CD4-positive, alpha-beta memory T cell (primary cell): ENCODE measurements at regions of chr17 and their contacts with region 1.

Region 1: GRCh38 chr17:42112552-42113176 is at the start of gene DHX58:
- DNase-seq: peak; percentile 81 to 87 (median 84)
- H3K4me3 ChIP-seq: peak within 1 kb of the TSS; percentile 76 to 86
- H3K4me3 Mint-ChIP-seq: peak within 1 kb of the TSS; percentile 87 to 95 (median 92)
- H3K27ac ChIP-seq: peak within 1 kb of the TSS; percentile 88
- H3K27ac Mint-ChIP-seq: peak within 1 kb of the TSS; percentile 92 to 98 (median 98)
- H3K4me1 ChIP-seq: peaks cover 37% of the 10 kb centered on the region
- H3K4me1 Mint-ChIP-seq: peaks cover 24 to 64% (median 46%) of the 10 kb centered on the region in 4 donors
- H3K27me3 ChIP-seq: no peaks in the 10 kb centered on the region
- H3K27me3 Mint-ChIP-seq: no peaks in the 10 kb centered on the region
- total RNA-seq, gene DHX58: 41.8 to 43.3 TPM

Region 2: DNA sequence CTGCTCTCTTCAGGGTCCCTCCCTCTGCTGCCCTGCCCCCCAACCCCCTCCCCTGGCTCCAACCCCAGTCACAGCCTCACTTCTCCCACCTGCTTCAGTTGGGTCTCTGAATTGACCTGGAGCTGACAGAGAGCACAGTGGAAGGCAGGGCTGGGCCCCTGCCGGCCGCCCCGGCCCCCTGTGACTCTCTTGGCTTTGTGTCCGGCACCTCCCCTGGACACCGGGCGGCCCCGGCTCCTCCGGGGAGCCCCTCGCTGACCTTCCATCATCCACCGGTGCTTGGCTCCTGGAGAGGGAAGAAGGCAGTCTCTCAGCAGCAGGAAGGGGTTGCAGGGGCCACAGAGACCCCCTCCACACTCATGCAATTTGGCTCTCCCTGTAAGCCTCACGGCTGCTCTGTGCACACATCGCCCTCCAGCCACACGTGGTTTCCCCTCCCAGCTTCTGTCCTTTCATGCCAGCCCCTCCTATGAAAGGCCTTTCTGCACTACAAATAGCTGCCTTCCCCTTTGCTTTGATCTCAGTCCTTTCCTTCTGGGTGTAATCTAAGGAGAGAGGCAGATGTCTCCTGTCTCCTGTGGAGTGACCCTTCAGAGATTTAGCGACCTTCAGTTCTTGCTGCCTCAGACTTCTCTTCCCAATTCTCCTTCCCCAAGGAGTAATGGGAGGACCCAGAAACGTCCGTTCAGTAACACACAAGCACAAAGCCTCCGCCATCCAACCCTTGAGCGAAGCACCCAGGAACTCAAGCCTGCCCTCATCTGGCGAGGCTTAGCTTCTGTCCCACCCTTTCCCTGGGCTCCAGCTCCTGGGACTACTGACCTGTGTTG is 84.5 kb before region 1 on chr17:
- CTCF ChIA-PET with region 1: interaction called, 43 read pairs
- POLR2A ChIA-PET with region 1: interaction called, 5 read pairs
- intact Hi-C with region 1: loop called (anchors 1 kb)
- DNase-seq: no peak
- H3K4me3 ChIP-seq: no peak overlapping the region
- H3K4me3 Mint-ChIP-seq: no peak overlapping the region
- H3K27ac ChIP-seq: no peak overlapping the region
- H3K27ac Mint-ChIP-seq: no peak overlapping the region
- H3K4me1 ChIP-seq: peaks cover 6% of the 10 kb centered on the region
- H3K4me1 Mint-ChIP-seq: peaks cover 3 to 6% (median 5%) of the 10 kb centered on the region in 4 donors
- H3K27me3 ChIP-seq: no peaks in the 10 kb centered on the region
- H3K27me3 Mint-ChIP-seq: peaks cover 2 to 3% of the 10 kb centered on the region in 2 donors

Region 3: GRCh38 chr17:42067351-42068091 is 45.1 kb before region 1 on chr17:
- CTCF ChIA-PET with region 1: interaction called, 124 read pairs
- POLR2A ChIA-PET with region 1: interaction called, 8 read pairs
- intact Hi-C with region 1: loop called (anchors 1 kb)
- DNase-seq: peak; percentile 48 to 66 (median 59)
- H3K4me3 ChIP-seq: no peak overlapping the region
- H3K4me3 Mint-ChIP-seq: no peak overlapping the region
- H3K27ac ChIP-seq: no peak overlapping the region
- H3K27ac Mint-ChIP-seq: no peak overlapping the region
- H3K4me1 ChIP-seq: peaks cover 18% of the 10 kb centered on the region
- H3K4me1 Mint-ChIP-seq: peaks cover 2 to 8% (median 6%) of the 10 kb centered on the region in 4 donors
- H3K27me3 ChIP-seq: peaks cover 13% of the 10 kb centered on the region
- H3K27me3 Mint-ChIP-seq: peaks cover 8 to 15% of the 10 kb centered on the region in 2 donors

Region 4: DNA sequence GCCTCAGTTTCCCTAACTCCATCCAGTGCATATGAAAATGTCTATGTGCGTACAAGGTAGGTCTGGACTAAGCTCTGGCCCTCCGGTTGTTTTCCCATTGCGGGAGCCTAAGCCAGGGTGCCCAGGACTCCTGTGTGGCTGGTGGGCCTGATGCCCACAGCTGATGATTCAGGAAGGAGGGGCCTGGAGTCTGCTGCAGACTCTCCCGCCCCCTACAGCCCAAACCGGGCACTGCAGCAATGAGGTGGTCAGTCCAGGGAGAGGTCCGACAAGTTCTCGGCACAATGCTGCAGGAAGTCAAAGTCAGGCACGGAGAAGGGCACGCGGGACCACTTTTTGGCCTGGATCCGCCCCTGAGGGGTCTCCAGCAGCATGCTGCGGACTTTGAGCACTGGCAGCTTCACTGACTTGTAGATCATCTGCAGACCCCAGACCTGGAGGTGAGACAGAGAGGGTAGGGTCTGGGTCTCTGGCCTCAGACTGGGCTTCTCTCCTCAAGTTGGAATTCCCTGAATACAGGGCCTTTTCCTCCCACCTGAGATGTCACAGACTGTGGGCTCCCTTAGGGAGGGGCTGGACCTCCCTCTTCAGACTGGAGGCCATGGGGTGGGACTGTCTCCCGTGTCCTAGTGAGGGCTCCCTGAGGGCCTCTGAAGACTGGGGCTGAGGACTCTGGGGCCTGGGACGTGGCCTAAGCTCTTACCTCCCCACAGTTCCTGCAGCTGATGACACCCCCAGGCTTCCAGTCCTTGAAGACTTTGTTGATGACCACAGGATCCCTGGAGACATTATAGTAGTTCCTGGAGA is 10.9 kb before region 1 on chr17:
- CTCF ChIA-PET with region 1: interaction called, 10 read pairs
- POLR2A ChIA-PET with region 1: interaction called, 14 read pairs
- intact Hi-C with region 1: no loop called
- DNase-seq: peak in 4 of 5 donors; percentile 32 to 49 (median 37)
- H3K4me3 ChIP-seq: no peak overlapping the region
- H3K4me3 Mint-ChIP-seq: no peak overlapping the region
- H3K27ac ChIP-seq: no peak overlapping the region
- H3K27ac Mint-ChIP-seq: no peak overlapping the region
- H3K4me1 ChIP-seq: peaks cover 7% of the 10 kb centered on the region
- H3K4me1 Mint-ChIP-seq: peaks cover 2 to 12% (median 7%) of the 10 kb centered on the region in 4 donors
- H3K27me3 ChIP-seq: peaks cover 6% of the 10 kb centered on the region
- H3K27me3 Mint-ChIP-seq: peaks cover 2 to 8% of the 10 kb centered on the region in 2 donors

Region 5: GRCh38 chr17:42153919-42154742 is 41.5 kb after region 1 on chr17:
- CTCF ChIA-PET with region 1: no interaction called
- POLR2A ChIA-PET with region 1: interaction called, 3 read pairs
- intact Hi-C with region 1: loop called (anchors 2 kb)
- DNase-seq: no peak
- H3K4me3 ChIP-seq: peak overlapping the region; percentile 86 to 96
- H3K4me3 Mint-ChIP-seq: peak overlapping the region; percentile 89 to 98 (median 94)
- H3K27ac ChIP-seq: peak overlapping the region; percentile 96
- H3K27ac Mint-ChIP-seq: peak overlapping the region; percentile 82 to 98 (median 96)
- H3K4me1 ChIP-seq: peaks cover 42% of the 10 kb centered on the region
- H3K4me1 Mint-ChIP-seq: peaks cover 24 to 49% (median 37%) of the 10 kb centered on the region in 4 donors
- H3K27me3 ChIP-seq: no peaks in the 10 kb centered on the region
- H3K27me3 Mint-ChIP-seq: no peaks in the 10 kb centered on the region

Region 6: DNA sequence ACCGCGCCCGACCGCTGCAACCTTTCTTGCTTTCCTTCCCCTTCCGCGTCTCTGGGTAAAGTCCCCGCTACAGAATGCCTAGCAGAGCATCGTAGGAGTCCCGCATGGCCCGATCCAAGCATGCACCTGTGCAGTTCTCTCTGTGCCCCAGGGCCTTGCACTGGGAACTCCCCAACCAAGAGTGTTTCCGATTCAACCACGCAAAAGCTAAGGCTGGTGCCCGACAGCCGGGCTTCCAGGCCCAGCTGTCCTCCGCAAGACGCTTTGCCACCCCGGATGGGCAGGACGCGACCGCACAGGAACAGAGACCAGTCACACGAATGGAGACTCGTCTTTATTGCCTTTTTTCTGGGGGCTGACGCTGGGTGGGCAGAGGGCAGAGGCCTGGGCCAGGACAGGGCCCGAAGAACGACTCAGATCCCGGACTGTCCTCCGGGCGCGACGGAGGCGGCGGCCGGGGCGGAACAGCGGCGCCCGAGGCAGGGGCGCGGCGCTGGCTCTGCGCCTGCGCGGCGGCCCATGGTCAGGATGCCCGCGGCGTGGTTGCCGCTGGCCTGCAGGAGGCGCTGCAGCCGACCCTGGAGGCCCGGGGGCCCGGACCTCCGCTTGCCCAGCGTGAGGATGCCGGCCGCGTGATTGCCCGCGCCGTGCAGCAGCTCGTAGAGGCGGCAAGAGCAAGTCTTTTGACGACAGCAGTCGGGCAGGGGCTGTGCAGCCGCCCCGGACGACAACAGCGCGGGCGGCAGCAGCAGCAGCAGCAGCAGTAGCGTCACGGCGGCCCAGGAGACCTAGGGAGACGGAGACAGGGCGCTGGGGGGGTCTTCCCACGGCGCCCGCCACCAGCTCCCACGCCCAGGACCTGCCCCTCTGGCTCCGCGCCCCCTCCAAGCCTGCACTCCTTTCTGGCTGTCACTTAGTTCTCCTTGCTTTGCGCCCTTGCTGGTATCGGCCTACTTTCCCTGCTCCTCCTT is 71.4 kb after region 1 on chr17:
- CTCF ChIA-PET with region 1: no interaction called
- POLR2A ChIA-PET with region 1: interaction called, 4 read pairs
- intact Hi-C with region 1: loop called (anchors 5 kb)
- DNase-seq: peak; percentile 74 to 84 (median 75)
- H3K4me3 ChIP-seq: peak overlapping the region; percentile 63 to 86
- H3K4me3 Mint-ChIP-seq: peak overlapping the region; percentile 87 to 96 (median 91)
- H3K27ac ChIP-seq: peak overlapping the region; percentile 72
- H3K27ac Mint-ChIP-seq: peak overlapping the region; percentile 78 to 94 (median 88)
- H3K4me1 ChIP-seq: peaks cover 56% of the 10 kb centered on the region
- H3K4me1 Mint-ChIP-seq: peaks cover 21 to 52% (median 35%) of the 10 kb centered on the region in 4 donors
- H3K27me3 ChIP-seq: no peaks in the 10 kb centered on the region
- H3K27me3 Mint-ChIP-seq: peaks cover 0 to 5% of the 10 kb centered on the region in 2 donors

Region 7: GRCh38 chr17:42459256-42459800 is 346.7 kb after region 1 on chr17:
- CTCF ChIA-PET with region 1: no interaction called
- POLR2A ChIA-PET with region 1: no interaction called
- intact Hi-C with region 1: no loop called
- DNase-seq: no peak
- H3K4me3 ChIP-seq: peak overlapping the region; percentile 56 to 67
- H3K4me3 Mint-ChIP-seq: peak overlapping the region; percentile 85 to 94 (median 91)
- H3K27ac ChIP-seq: peak overlapping the region; percentile 42
- H3K27ac Mint-ChIP-seq: peak overlapping the region; percentile 86 to 93 (median 90)
- H3K4me1 ChIP-seq: peaks cover 45% of the 10 kb centered on the region
- H3K4me1 Mint-ChIP-seq: peaks cover 31 to 43% (median 40%) of the 10 kb centered on the region in 4 donors
- H3K27me3 ChIP-seq: no peaks in the 10 kb centered on the region
- H3K27me3 Mint-ChIP-seq: no peaks in the 10 kb centered on the region

Region 8: DNA sequence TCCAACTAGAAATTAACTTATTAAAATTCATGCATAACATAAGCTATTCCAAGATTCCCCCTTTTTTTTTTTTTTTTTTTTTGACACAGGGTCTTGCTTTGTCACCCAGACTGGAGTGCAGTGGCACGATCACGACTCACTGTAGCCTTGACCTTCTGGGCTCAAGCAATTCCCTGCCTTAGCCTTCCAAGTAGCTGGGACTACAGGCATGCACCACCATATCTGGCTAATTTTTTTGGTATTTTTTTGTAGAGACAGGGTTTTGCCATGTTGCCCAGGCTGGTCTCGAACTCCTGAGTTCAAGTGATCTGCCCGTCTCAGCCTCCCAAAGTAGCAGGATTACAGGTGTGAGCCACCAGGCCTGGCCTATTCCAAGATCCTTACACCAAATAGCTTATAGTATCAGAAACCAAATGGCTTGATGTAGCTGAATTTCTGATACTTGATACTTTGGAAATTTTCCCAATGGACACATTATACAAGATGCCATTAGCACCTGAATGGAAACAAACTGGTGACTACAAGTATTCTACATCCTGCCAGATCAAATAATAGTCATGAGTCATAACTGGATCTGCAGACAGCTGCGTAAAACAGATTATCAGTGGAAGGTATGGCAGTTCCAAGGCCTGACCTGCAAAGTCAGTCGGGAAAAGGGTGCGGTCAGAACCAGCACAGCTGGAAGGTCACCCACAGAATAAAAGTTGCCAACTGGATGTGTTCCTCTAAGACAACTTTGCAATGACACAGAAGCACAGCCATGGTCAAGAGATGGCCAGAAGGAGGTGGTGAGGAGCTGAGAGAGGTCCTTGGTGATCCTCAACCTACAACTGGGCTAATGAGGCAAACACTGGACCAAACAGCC is 511.3 kb after region 1 on chr17:
- CTCF ChIA-PET with region 1: no interaction called
- POLR2A ChIA-PET with region 1: no interaction called
- intact Hi-C with region 1: no loop called
- DNase-seq: no peak
- H3K4me3 ChIP-seq: no peak overlapping the region
- H3K4me3 Mint-ChIP-seq: no peak overlapping the region
- H3K27ac ChIP-seq: no peak overlapping the region
- H3K27ac Mint-ChIP-seq: no peak overlapping the region
- H3K4me1 ChIP-seq: no peaks in the 10 kb centered on the region
- H3K4me1 Mint-ChIP-seq: peaks cover 0 to under 1% (median 0%) of the 10 kb centered on the region in 4 donors
- H3K27me3 ChIP-seq: no peaks in the 10 kb centered on the region
- H3K27me3 Mint-ChIP-seq: no peaks in the 10 kb centered on the region